Heart left ventricle (tissue), 16 donors: ENCODE measurements at regions of chr19 and their contacts with region 1.

Region 1: DNA sequence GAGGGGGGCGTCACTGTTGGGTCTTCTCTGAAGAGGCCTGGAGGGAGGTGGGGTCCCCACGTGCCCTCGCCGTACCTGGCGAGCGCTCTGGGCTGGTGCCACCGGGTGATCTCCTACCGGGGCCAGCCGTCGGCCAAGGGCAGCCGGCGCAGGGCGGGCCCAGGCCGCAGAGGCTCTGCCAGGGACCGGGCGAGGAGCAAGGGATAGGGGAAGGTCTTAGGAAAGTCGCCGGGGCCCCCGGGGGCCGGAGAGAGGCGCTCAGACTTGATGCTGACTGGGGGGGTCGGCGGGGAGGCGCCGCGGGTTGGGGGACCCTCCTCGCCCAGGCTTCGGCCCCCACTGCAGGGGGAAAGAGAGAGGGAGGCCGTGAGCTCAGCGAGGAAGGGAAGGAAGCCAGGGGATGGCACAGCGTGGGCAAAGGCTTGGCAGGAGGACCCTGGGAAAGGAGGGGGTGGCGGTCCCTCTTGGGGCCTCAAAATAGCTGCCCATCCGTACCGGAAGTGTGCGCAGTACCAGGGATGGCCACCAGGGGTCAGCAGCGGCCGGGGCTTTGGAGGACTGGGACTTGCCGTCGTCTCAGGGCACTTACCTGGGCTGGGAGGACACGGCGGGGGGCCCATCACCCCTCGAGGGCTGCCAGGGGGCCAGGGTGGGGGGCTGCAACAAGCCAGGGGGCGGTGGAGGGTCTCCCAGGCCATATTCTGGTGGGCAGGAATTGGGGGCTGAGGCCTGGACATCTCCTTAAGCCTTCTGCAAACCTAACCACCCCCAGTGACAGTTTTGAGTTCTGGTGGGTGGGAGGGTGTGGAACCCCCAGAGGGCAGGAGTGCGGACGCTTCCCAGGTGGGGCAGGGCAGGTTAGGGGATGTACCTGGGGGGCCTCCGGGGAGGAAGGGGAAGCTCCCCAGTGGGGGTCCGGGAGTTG is 7.7 kb upstream of the TMEM161A start:
- DNase-seq: peak; percentile 68 to 90 (median 79)
- ATAC-seq: peak; percentile 39 to 81 (median 62)
- H3K4me3 ChIP-seq: peak overlapping the region in 8 of 12 donors; percentile 12 to 38 (median 28)
- H3K27ac ChIP-seq: peak overlapping the region in 3 of 12 donors; percentile 13 to 75 (median 22)
- H3K4me1 ChIP-seq: peaks cover 0 to 7% (median 3%) of the 10 kb centered on the region in 12 donors
- H3K27me3 ChIP-seq: no peaks in the 10 kb centered on the region
- CTCF ChIP-seq: peak; percentile 85 to 96 (median 91)
- POLR2A ChIP-seq: no peak

Region 2: DNA sequence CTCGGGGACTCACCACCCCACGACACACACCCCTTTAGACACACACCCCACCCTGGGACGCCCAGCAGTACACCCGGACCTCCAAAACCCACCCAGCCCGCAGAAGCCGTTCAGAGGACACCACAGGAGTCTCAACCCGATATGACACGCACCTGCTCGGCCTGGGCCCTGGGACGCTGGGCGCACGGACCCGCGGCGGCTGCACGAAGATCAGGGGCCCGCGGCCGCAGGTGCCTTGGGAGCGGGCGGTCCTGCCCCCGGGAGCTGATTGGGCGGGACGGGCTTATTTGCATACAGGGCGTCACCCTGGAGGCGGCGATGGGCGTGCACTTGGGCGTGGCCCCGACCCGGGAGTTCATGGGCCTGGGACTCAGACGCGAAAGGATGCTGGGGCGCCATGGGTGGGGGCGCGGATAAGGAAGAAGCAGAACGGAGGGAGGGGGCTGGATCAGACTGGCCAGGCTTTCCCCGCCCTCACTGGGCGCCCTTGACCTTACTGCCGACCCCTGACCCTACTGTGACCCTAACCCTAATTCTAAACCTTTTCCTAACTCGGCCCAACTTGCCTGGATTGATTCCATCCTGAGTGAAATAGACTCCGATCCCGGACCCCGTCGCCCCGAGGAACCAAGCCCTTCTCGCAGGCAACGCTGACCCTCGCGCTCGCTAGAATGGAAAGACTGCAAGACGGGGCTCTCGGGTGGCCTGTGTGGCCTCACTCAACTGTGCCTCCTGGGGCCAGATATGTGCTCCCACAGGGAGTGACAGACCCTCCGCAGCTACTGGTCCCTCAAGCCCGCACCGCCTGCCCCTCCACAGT is 24.3 kb after region 1 on chr19 and contains the start of gene MEF2B:
- intact Hi-C with region 1: loop called in 3 of 10 experiments (anchors 2 to 5 kb)
- DNase-seq: peak; percentile 79 to 89 (median 83)
- ATAC-seq: peak; percentile 62 to 95 (median 91)
- H3K4me3 ChIP-seq: peak within 1 kb of the TSS in 10 of 12 donors; percentile 3 to 48 (median 39)
- H3K27ac ChIP-seq: no peak within 1 kb of the TSS
- H3K4me1 ChIP-seq: peaks cover 0 to 13% (median 6%) of the 10 kb centered on the region in 12 donors
- H3K27me3 ChIP-seq: no peaks in the 10 kb centered on the region
- CTCF ChIP-seq: no peak
- POLR2A ChIP-seq: no peak
- total RNA-seq, gene MEF2B: 0.23 to 0.92 (median 0.49) TPM in 8 of 9 donors, not detected in the other

Region 3: DNA sequence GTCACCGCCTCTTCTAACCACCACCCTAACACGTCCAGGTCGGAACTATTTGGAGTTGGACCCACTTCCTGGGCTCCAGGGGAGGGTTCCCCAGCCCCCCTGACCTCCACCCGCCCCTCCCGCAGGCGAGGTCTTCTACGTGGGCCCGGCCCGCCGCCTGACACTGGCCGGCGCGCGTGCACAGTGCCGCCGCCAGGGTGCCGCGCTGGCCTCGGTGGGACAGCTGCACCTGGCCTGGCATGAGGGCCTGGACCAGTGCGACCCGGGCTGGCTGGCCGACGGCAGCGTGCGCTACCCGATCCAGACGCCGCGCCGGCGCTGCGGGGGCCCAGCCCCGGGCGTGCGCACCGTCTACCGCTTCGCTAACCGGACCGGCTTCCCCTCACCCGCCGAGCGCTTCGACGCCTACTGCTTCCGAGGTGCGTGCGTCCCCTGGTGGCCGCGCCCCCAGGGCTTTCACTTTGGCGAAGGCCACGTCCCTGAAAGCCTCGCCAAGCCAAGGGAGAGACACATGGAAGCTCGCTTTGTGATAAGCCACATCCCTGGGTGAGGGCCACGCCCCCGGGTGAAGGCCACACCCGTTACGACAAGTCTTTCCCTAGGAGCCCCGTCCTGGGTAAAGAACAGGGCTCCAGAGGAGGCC is 79.0 kb after region 1 on chr19:
- intact Hi-C with region 1: loop called in 1 of 10 experiments (anchors 2 kb)
- DNase-seq: peak; percentile 37 to 83 (median 51)
- ATAC-seq: peak in 3 of 4 donors; percentile 50 to 71 (median 54)
- H3K4me3 ChIP-seq: peak overlapping the region in 11 of 12 donors; percentile 14 to 56 (median 39)
- H3K27ac ChIP-seq: no peak overlapping the region
- H3K4me1 ChIP-seq: peaks cover 0 to 11% (median 4%) of the 10 kb centered on the region in 12 donors
- H3K27me3 ChIP-seq: peaks cover 18 to 60% (median 35%) of the 10 kb centered on the region in 9 donors
- CTCF ChIP-seq: peak; percentile 34 to 68 (median 52)
- POLR2A ChIP-seq: no peak

Region 4: DNA sequence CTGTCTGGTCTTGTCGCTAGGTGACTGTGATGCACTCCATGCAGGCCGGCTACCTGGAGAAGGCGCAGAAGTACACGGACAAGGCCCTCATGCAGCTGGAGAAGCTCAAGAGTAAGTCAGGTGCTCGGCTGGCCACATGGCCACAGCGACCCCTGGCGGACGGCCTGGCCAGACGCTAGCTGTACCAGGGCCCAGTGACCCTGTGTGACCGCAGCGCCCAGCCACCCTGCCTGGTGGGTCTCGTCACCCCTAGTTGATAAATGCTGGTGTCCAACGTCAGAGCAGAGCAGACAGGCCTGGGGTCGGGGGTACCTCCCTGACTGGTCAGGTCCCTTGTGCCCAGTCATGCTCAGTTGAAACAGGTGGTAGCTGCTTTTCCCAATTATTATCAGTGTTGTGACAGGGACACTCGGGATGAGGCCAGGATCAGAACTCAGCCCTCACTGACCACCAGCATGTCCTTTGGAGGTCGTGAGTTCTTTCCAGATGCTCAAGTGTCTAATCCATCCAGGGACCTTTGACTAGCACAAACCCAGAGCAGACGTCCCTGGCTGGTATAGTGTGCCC is 196.9 kb after region 1 on chr19:
- intact Hi-C with region 1: loop called in 4 of 10 experiments (anchors 5 to 10 kb)
- DNase-seq: peak; percentile 39 to 76 (median 60)
- ATAC-seq: peak; percentile 62 to 83 (median 76)
- H3K4me3 ChIP-seq: no peak overlapping the region
- H3K27ac ChIP-seq: peak overlapping the region in 1 of 12 donors; percentile 38
- H3K4me1 ChIP-seq: peaks cover 0 to 6% (median 0%) of the 10 kb centered on the region in 12 donors
- H3K27me3 ChIP-seq: no peaks in the 10 kb centered on the region
- CTCF ChIP-seq: peak; percentile 67 to 87 (median 78)
- POLR2A ChIP-seq: no peak

Region 5: DNA sequence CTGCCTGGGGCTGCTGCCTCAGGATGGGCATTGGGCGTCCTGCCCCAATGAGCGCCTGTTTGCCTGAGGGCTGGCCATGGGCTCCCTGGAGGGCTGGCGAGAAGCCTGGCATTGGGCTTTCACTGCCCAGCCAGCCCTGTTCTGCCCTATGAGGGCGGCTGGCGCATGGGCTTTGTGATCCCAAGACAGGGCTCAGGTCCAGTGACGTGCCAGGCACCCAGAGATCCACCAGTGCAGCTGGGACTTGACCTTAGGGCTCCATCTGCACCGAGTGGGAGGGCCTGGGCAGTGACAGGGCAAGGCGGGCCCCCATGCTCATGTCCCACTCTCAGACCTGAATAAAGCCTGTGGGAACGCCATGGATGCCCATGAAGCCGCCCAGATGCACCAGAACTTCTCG is 209.0 kb after region 1 on chr19:
- intact Hi-C with region 1: loop called in 1 of 10 experiments (anchors 5 kb)
- DNase-seq: no peak
- ATAC-seq: no peak
- H3K4me3 ChIP-seq: no peak overlapping the region
- H3K27ac ChIP-seq: no peak overlapping the region
- H3K4me1 ChIP-seq: peaks cover 0 to 4% (median 0%) of the 10 kb centered on the region in 12 donors
- H3K27me3 ChIP-seq: no peaks in the 10 kb centered on the region
- CTCF ChIP-seq: no peak
- POLR2A ChIP-seq: no peak

Region 6: GRCh38 chr19:19404879-19405860 is 259.2 kb after region 1 on chr19 and contains the start of gene GATAD2A:
- intact Hi-C with region 1: no loop called
- DNase-seq: peak; percentile 95 to 98 (median 95)
- ATAC-seq: peak; percentile 90 to 96 (median 95)
- H3K4me3 ChIP-seq: peak within 1 kb of the TSS; percentile 66 to 100 (median 94)
- H3K27ac ChIP-seq: peak within 1 kb of the TSS; percentile 63 to 95 (median 90)
- H3K4me1 ChIP-seq: peaks cover 4 to 68% (median 37%) of the 10 kb centered on the region in 12 donors
- H3K27me3 ChIP-seq: no peaks in the 10 kb centered on the region
- CTCF ChIP-seq: peak in 11 of 12 donors; percentile 6 to 72 (median 52)
- POLR2A ChIP-seq: peak in 1 of 2 donors; percentile 62
- total RNA-seq, gene GATAD2A: 18.1 to 49.5 (median 35.5) TPM

Region 7: GRCh38 chr19:19420570-19421298 is 274.8 kb after region 1 on chr19:
- intact Hi-C with region 1: no loop called
- DNase-seq: no peak
- ATAC-seq: no peak
- H3K4me3 ChIP-seq: no peak overlapping the region
- H3K27ac ChIP-seq: no peak overlapping the region
- H3K4me1 ChIP-seq: peaks cover 0 to 78% (median 45%) of the 10 kb centered on the region in 12 donors
- H3K27me3 ChIP-seq: no peaks in the 10 kb centered on the region
- CTCF ChIP-seq: no peak
- POLR2A ChIP-seq: no peak

Region 8: DNA sequence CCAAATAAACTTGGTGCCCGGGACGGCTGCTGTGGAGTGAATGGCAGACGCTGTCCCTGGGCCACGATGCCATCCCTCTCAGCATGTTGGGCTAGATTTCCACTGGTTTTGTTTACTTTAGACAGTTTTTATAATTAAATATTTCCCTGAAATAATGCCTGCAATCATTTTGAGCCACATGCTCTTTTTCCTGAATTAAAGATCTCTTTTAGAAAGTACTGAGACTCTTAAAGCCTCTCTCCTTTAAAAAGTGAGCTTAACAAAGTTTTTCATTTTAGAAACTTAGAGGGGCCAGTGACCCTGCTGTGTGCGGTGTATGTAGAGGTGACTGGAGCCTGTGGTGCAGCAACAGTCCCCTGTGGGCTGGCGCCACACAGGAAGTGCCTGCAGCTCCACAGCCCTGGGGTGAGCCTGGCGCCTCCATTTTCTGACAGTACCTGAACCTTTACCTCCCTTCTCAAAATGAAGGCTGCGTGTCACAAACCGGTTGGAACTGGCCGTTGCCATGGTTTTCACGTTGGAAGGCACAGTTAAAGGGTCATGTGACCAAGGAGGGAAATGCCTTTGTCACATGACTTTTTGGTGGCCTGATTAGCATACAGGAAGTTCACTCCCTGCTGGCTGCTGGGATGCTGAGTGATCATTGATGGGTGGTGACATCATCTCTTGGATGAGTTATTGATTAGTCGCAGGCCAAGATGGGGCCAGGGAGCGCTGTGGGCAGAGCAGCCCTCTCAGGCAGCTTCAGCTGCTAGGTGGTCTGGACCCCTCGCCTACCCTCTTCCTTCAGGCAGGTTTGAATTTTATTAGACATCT is 343.1 kb after region 1 on chr19:
- intact Hi-C with region 1: loop called in 2 of 10 experiments (anchors 5 to 10 kb)
- DNase-seq: peak; percentile 77 to 84 (median 79)
- ATAC-seq: peak; percentile 10 to 68 (median 56)
- H3K4me3 ChIP-seq: peak overlapping the region in 8 of 12 donors; percentile 1 to 40 (median 25)
- H3K27ac ChIP-seq: peak overlapping the region; percentile 38 to 94 (median 70)
- H3K4me1 ChIP-seq: peaks cover 10 to 60% (median 45%) of the 10 kb centered on the region in 12 donors
- H3K27me3 ChIP-seq: no peaks in the 10 kb centered on the region
- CTCF ChIP-seq: no peak
- POLR2A ChIP-seq: no peak